ENCODE measurements at regions of chr11 and their contacts with region 1.

Region 1: DNA sequence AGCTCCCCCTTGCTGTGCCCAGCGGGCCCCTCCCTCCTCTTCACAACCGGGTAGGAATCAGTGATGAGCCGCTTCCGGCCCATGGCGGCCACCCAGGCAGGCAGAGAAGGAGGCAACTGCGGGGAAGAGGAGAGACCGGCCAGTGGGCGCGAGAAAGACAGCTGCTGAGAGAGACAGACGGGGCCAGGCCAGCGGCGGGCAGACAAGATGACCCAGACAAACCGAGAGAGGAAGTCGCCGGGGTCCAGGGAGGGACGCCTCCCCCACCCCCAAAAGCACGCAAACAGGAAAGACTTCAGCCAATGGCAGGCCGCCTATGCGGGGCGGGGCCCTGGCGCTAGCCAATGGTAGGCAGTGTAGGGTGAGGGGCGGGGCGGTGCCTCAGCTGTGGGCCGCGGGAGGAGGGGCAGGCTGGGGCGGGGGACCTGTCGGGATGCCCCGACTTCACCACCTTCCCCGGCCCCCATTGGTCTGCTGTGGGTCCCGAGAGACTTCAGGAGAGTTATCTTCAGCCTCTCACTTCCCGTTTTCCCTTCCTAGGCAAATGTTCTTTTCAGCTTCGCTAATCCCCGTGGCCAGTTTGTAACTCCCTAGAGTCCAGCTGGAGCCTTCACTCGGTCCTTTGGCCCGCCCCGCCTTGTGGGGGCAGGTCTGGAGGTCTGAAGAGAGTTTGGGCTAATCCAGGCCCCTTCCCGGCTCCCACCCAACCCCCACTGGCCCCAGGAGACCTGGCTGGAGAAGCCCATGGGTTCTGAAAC is at the start of gene POLD4:
- DNase-seq: peak; percentile 90 to 98 (median 94)
- ATAC-seq: peak; percentile 85 to 89
- H3K4me3 Mint-ChIP-seq: peak within 1 kb of the TSS; percentile 93 to 100 (median 97)
- H3K27ac Mint-ChIP-seq: peak within 1 kb of the TSS; percentile 98 to 100 (median 99)
- H3K4me1 Mint-ChIP-seq: peaks cover 22 to 85% (median 58%) of the 10 kb centered on the region in 4 donors
- H3K27me3 Mint-ChIP-seq: no peaks in the 10 kb centered on the region
- polyA plus RNA-seq, gene POLD4: 87.7 to 105 (median 102) TPM

Region 2: DNA sequence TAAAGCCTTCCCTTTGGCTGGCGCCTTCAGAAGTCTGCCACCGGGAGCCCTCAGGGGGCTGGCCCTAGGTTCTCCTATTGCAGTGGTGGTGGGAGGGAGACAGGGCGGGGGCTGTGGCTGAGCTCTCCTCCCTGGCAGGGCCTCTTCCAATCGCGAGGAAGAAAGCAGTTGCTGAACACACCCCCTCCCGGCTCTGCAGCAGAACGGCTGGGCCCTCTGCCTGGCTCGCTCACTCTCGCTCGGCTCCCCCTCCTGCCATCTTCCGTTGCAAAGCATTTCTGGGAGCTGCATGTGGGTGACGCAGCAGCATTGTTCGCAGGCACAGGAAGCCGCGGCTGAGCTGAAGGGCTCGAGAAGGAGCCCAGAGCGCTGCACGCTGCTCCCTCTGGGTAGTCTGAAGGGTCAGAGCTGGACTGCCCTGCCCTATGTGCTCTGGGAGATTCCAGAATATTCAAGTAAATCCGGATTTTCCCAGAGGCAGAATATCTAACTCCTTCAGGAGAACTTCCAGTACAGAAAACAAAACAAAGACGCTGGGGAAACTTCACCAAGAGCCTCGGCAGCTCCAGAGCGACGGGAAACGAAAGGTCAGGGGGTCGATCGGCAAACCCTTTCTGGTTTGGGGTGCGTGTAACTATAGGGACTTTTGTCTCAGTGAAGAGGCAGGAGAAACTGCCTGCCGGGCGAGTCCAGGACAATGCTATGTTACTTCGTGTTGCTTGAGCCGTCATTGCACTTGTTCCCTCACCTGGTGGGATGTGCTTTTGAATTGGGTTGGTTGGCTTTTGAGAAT is 113.5 kb before region 1 on chr11:
- POLR2A ChIA-PET with region 1: interaction called, 20 read pairs
- DNase-seq: peak; percentile 87 to 98 (median 96)
- ATAC-seq: peak; percentile 85 to 86
- H3K4me3 Mint-ChIP-seq: peak overlapping the region; percentile 94 to 100 (median 98)
- H3K27ac Mint-ChIP-seq: peak overlapping the region; percentile 97 to 100 (median 100)
- H3K4me1 Mint-ChIP-seq: peaks cover 37 to 61% (median 54%) of the 10 kb centered on the region in 4 donors
- H3K27me3 Mint-ChIP-seq: no peaks in the 10 kb centered on the region

Region 3: GRCh38 chr11:67288452-67289225 is 64.9 kb before region 1 on chr11:
- POLR2A ChIA-PET with region 1: interaction called, 35 read pairs
- DNase-seq: peak; percentile 85 to 95 (median 94)
- ATAC-seq: peak; percentile 67 to 71
- H3K4me3 Mint-ChIP-seq: peak overlapping the region; percentile 78 to 90 (median 88)
- H3K27ac Mint-ChIP-seq: peak overlapping the region; percentile 97 to 100 (median 98)
- H3K4me1 Mint-ChIP-seq: peaks cover 24 to 76% (median 62%) of the 10 kb centered on the region in 4 donors
- H3K27me3 Mint-ChIP-seq: no peaks in the 10 kb centered on the region

Region 4: DNA sequence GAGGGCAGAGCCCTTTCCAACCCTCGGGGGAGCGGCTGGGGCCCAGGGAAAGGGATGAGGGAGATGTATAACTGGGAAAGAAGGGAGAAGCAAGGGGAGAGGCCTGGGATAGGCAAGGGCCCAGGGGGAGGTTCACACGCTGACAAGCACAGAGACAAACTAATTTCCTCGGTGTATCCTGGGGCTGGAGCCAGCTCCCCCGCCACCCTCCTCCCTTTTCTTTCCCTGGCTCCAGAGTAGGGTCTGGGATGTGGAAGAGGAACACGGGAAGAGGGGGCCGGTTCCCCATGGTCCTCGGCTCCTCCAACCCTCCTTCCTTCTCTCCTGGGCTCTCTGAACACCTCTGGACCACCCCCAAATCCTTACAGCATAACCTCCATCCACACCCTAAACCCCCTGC is 13.1 kb after region 1 on chr11:
- POLR2A ChIA-PET with region 1: interaction called, 493 read pairs
- DNase-seq: no peak
- ATAC-seq: no peak
- H3K4me3 Mint-ChIP-seq: peak overlapping the region in 1 of 10 donors; percentile 14
- H3K27ac Mint-ChIP-seq: peak overlapping the region in 2 of 10 donors; percentile 34 to 41
- H3K4me1 Mint-ChIP-seq: peaks cover 49 to 86% (median 70%) of the 10 kb centered on the region in 4 donors
- H3K27me3 Mint-ChIP-seq: no peaks in the 10 kb centered on the region

Region 5: GRCh38 chr11:67409261-67409666 is 55.8 kb after region 1 on chr11:
- POLR2A ChIA-PET with region 1: interaction called, 55 read pairs
- DNase-seq: peak; percentile 46 to 90 (median 76)
- ATAC-seq: peak; percentile 73 to 85
- H3K4me3 Mint-ChIP-seq: peak overlapping the region; percentile 93 to 99 (median 98)
- H3K27ac Mint-ChIP-seq: peak overlapping the region; percentile 53 to 98 (median 94)
- H3K4me1 Mint-ChIP-seq: peaks cover 44 to 96% (median 88%) of the 10 kb centered on the region in 4 donors
- H3K27me3 Mint-ChIP-seq: no peaks in the 10 kb centered on the region

Region 6: DNA sequence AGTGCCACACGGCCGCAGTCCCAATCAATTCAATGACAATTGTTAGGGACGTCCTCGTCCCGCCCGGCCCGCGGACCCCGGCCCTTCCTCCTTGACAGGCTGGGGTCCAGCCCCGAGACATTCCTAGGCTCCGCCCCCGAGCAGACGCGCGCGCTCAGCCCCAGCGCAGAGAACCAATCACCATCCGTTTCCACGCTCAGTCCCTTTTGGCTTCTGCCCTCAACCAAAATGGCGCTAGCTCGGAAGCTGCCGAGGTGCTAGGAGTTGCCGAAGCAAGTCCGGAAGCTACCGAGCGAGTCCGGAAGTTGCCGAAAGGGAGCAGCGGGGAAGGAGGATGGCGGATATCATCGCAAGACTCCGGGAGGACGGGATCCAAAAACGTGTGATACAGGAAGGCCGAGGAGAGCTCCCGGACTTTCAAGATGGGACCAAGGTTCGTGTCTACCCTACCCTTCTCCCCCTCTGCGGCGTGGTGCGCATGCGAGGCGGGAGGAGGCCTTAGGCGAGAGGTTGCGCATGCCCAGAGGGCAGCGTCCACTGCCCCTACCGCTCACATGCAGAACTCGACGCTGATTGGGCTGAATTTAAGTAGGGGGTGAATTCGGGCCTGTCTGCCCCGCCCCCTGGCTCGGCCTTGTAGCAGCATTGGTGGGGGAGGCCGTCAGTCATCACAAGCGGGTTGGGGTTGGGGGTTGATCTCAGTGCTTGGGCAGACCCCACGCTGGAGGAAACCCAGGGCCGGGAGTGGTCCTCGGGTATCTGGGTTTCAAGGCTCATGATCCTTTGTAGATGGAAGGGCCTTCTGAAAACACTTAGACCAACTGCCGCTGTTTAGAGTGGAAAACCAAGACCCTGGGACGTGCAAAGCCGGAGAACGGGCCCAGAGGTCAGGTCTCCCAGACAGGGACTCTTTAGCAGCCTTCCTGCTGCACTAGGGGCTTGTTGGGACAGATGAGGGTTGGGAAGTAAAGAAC is 129.6 kb after region 1 on chr11 and contains the start of gene AIP:
- POLR2A ChIA-PET with region 1: interaction called, 29 read pairs
- DNase-seq: peak; percentile 90 to 99 (median 97)
- ATAC-seq: peak; percentile 75 to 78
- H3K4me3 Mint-ChIP-seq: peak within 1 kb of the TSS; percentile 86 to 100 (median 98)
- H3K27ac Mint-ChIP-seq: peak within 1 kb of the TSS; percentile 96 to 100 (median 99)
- H3K4me1 Mint-ChIP-seq: peaks cover 29 to 56% (median 53%) of the 10 kb centered on the region in 4 donors
- H3K27me3 Mint-ChIP-seq: no peaks in the 10 kb centered on the region
- polyA plus RNA-seq, gene AIP: 146 to 169 (median 146) TPM